BJ (cell line): ENCODE measurements at regions of chr18 and their contacts with region 1.

Region 1: DNA sequence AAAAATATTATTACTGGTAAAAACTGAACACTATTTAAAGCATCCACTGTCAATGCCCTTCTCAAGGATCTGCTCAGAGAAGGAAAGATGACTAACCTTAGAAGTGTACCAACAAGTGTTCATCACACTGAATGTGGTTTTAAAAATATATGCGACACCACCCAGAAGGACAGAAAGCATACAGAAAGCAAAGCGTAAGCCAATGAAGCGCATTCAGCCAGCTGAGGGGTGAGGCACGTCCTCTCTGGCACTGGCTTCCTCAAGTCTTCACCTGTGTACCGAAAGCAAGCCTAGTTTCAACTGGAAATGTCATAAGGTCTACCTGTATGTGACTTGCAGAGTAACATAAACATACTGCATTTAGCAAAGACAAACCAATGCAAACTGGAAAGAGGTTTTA is 88.8 kb downstream of the PSMG2 start:
- DNase-seq: no peak
- H3K4me3 ChIP-seq: no peak overlapping the region
- H3K27me3 ChIP-seq: no peaks in the 10 kb centered on the region
- CTCF ChIP-seq: no peak

Region 2: DNA sequence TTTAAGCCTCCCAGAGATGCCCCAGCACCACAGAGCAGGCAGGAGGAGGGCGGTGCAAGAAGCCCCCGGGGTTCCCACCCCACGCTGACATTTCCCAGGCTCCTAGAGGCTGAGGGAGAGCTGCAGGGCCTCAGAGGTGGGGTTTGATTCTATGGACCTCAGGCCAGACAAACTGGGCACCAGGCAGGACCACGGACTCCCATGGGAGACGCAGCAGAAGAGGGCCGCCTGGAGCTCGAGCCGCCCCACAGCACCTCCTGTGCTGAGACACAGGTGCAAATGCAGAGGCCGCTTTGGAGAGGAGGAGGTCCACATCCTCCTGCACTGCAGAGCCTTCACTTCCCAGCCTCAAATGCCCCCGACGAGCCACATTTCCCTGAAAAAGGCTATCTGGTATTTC is 26.0 kb before region 1 on chr18:
- CTCF ChIA-PET with region 1: no interaction called
- POLR2A ChIA-PET with region 1: interaction called, 11 read pairs
- DNase-seq: no peak
- H3K4me3 ChIP-seq: no peak overlapping the region
- H3K27me3 ChIP-seq: peaks cover 2% of the 10 kb centered on the region
- CTCF ChIP-seq: no peak